K562 (cell line): ENCODE measurements at regions of chr22 and their contacts with region 1.

Region 1: GRCh38 chr22:16917144-16918003 is 90.6 kb downstream of the GAB4 start:
- DNase-seq: peak; percentile 75 to 81 (median 78)
- ATAC-seq: peak; percentile 95
- H3K4me3 ChIP-seq: no peak overlapping the region
- H3K27ac ChIP-seq: no peak overlapping the region
- H3K4me1 ChIP-seq: no peaks in the 10 kb centered on the region
- H3K27me3 ChIP-seq: peaks cover 0 to 4% of the 10 kb centered on the region in 2 experiments; a peak in 1 of 5 replicates
- CTCF ChIP-seq: peak; percentile 77 to 87 (median 83)
- EP300 ChIP-seq: no peak
- POLR2A ChIP-seq: no peak
- RAD21 ChIP-seq: peak; percentile 61 to 80

Region 2: DNA sequence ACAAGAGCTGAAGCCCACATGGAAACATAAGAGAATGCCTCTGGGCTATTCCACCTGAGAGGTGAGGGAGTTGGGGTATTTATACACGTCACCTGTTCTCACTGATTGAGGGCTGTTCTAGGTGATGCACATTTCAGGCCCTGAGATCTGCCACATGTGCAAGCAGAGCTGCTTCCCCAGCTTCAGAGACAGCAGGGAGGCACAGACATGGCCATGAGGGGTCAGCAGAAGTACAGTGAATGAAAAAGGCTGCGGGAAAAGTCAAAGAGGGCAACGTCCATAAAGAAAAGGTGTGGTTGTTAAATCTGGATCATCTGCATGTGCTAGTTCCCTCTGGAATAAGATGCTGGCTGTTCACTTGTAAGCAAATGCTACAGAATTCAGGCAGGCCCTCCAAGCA is 15.2 kb after region 1 on chr22:
- CTCF ChIA-PET with region 1: no interaction called
- POLR2A ChIA-PET with region 1: no interaction called
- in situ Hi-C with region 1: no loop called
- intact Hi-C with region 1: no loop called
- DNase-seq: peak in 1 of 4 experiments; percentile 9
- ATAC-seq: peak; percentile 63; the same call in 2 of the 3 replicates
- H3K4me3 ChIP-seq: no peak overlapping the region
- H3K27ac ChIP-seq: no peak overlapping the region
- H3K4me1 ChIP-seq: no peaks in the 10 kb centered on the region
- H3K27me3 ChIP-seq: no peaks in the 10 kb centered on the region
- CTCF ChIP-seq: peak; percentile 6 to 50 (median 43); a peak in 4 of 6 replicates
- EP300 ChIP-seq: no peak
- POLR2A ChIP-seq: no peak
- RAD21 ChIP-seq: peak in 1 of 2 experiments; percentile 45; a peak in 2 of 4 replicates

Region 3: DNA sequence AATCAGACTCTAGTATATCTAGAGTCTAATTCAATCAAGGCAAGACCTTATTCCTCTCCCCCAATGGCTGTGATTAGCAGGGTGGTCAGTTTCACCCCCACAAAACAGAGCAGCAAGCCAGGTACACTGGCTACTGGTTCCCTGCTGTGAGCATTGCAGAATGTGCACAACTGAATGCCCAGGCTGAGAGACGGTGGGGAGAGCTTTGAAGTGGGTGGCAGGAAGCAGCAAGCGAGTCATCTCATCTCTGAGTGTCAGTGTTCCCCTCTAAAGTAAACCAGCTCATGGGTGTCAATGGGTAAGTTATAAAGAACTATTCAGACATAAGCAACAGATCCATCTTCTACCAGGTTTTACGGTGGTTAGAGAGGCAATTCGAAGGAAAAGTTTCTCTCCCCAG is 53.1 kb after region 1 on chr22:
- CTCF ChIA-PET with region 1: no interaction called
- POLR2A ChIA-PET with region 1: no interaction called
- in situ Hi-C with region 1: no loop called
- intact Hi-C with region 1: no loop called
- DNase-seq: no peak
- ATAC-seq: no peak
- H3K4me3 ChIP-seq: no peak overlapping the region
- H3K27ac ChIP-seq: no peak overlapping the region
- H3K4me1 ChIP-seq: no peaks in the 10 kb centered on the region
- H3K27me3 ChIP-seq: no peaks in the 10 kb centered on the region; a peak in 2 of 5 replicates
- CTCF ChIP-seq: no peak
- EP300 ChIP-seq: no peak
- POLR2A ChIP-seq: no peak
- RAD21 ChIP-seq: no peak

Region 4: DNA sequence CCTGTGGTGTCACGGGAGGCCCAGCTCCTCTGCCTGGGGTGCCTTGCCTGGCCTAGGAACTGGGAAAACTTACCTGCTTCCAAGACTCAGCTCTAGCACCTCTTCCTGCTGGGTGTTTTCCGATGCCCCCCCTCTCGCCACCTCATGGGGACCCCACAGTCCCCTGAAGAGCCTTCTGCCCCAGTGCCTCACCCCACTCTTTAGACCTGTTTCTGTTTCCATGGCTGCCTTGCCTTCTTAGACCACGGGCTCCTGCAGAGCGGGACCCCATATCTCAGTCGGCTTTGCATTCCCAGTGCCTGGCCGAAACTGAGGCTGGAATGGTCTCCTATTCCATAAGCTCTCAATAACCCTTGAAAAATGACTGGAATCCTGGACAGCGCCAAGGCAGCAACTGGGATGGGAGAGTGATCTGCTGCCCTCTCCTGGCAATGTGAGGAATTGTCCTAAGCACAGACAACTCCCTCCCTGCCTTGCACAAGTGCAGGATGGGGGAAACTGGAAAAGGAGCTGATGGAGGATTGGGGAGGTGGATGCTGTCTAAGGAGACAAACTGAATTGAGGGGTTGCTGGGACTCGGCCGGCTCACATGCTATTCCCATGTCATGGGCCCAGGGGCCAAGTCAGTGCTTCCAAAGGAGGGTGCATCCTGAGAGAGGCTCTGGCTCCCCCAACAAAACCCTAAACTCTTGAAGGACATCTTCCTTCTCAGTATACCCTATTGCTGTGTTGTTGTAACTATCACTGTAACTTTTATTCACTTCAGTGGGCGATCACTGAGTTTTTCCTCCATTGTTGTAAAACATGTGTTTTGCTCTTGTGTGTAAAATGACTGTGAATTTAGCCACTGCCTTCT is 140.8 kb after region 1 on chr22:
- CTCF ChIA-PET with region 1: interaction called, 29 read pairs
- POLR2A ChIA-PET with region 1: interaction called, 3 read pairs
- in situ Hi-C with region 1: loop called (anchors 5 kb)
- intact Hi-C with region 1: loop called (anchors 1 kb)
- DNase-seq: peak; percentile 75 to 83 (median 78)
- ATAC-seq: peak; percentile 90
- H3K4me3 ChIP-seq: no peak overlapping the region
- H3K27ac ChIP-seq: no peak overlapping the region
- H3K4me1 ChIP-seq: no peaks in the 10 kb centered on the region; a peak in 1 of 5 replicates
- H3K27me3 ChIP-seq: no peaks in the 10 kb centered on the region
- CTCF ChIP-seq: peak; percentile 90 to 97 (median 94)
- EP300 ChIP-seq: no peak
- POLR2A ChIP-seq: no peak
- RAD21 ChIP-seq: peak; percentile 60 to 83

Region 5: GRCh38 chr22:17149076-17149810 is 231.9 kb after region 1 on chr22:
- CTCF ChIA-PET with region 1: no interaction called
- POLR2A ChIA-PET with region 1: no interaction called
- in situ Hi-C with region 1: no loop called
- intact Hi-C with region 1: no loop called
- DNase-seq: no peak
- ATAC-seq: no peak
- H3K4me3 ChIP-seq: no peak overlapping the region
- H3K27ac ChIP-seq: no peak overlapping the region
- H3K4me1 ChIP-seq: no peaks in the 10 kb centered on the region
- H3K27me3 ChIP-seq: no peaks in the 10 kb centered on the region
- CTCF ChIP-seq: no peak
- EP300 ChIP-seq: no peak
- POLR2A ChIP-seq: no peak
- RAD21 ChIP-seq: no peak

Region 6: GRCh38 chr22:17492247-17492646 is 574.9 kb after region 1 on chr22:
- CTCF ChIA-PET with region 1: no interaction called
- POLR2A ChIA-PET with region 1: no interaction called
- in situ Hi-C with region 1: loop called (anchors 10 kb)
- intact Hi-C with region 1: no loop called
- DNase-seq: no peak
- ATAC-seq: no peak
- H3K4me3 ChIP-seq: no peak overlapping the region
- H3K27ac ChIP-seq: no peak overlapping the region
- H3K4me1 ChIP-seq: no peaks in the 10 kb centered on the region
- H3K27me3 ChIP-seq: peaks cover 24 to 27% of the 10 kb centered on the region in 2 experiments
- CTCF ChIP-seq: no peak
- EP300 ChIP-seq: no peak
- POLR2A ChIP-seq: no peak
- RAD21 ChIP-seq: no peak

Region 7: DNA sequence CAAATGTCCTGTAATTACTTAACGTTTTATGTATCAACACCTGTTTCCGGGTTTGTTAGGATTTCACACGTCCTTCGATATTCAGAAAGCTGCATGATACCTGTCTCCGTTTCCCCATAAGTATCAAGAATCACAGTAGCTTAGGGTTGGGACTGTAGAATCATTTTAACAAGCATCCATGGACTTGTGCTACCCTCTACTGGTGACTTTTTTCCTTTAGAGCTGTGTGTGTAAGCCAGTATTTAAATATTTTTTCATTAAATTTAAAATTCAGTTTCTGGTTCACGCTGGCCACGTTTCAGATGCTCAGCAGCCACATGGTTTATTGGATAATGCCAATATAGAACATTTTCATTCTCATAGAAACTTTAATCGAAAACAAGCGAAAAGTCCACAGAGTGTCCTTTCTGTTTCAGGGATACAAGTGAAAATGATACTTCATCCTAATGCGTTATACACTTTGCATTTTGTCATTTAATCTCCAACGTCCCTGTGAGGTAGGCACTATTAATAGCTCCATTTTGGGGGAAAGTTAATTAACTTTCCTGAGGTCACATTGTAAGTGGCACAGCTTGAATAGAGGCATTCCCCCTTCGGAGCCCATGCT is 584.4 kb after region 1 on chr22:
- CTCF ChIA-PET with region 1: no interaction called
- POLR2A ChIA-PET with region 1: no interaction called
- in situ Hi-C with region 1: loop called (anchors 10 kb)
- intact Hi-C with region 1: loop called (anchors 5 kb)
- DNase-seq: peak; percentile 51 to 75 (median 56)
- ATAC-seq: peak; percentile 91
- H3K4me3 ChIP-seq: no peak overlapping the region
- H3K27ac ChIP-seq: no peak overlapping the region
- H3K4me1 ChIP-seq: no peaks in the 10 kb centered on the region
- H3K27me3 ChIP-seq: peaks cover 17 to 31% of the 10 kb centered on the region in 2 experiments
- CTCF ChIP-seq: peak; percentile 67 to 95 (median 68); a peak in 5 of 6 replicates
- EP300 ChIP-seq: no peak
- POLR2A ChIP-seq: no peak
- RAD21 ChIP-seq: peak; percentile 87 to 96